ENCODE measurements at regions of chr1 and their contacts with region 1.

Region 1: GRCh38 chr1:234326497-234327366 is 46.5 kb upstream of the COA6 start:
- DNase-seq: peak; percentile 81
- H3K4me3 Mint-ChIP-seq: peak overlapping the region; percentile 75
- H3K27ac Mint-ChIP-seq: peak overlapping the region; percentile 41
- H3K4me1 Mint-ChIP-seq: peaks cover 13% of the 10 kb centered on the region
- H3K27me3 Mint-ChIP-seq: peaks cover 14% of the 10 kb centered on the region

Region 2: GRCh38 chr1:234125283-234125682 is 201.4 kb before region 1 on chr1:
- CTCF ChIA-PET with region 1: interaction called, 14 read pairs
- intact Hi-C with region 1: no loop called
- DNase-seq: peak; percentile 57
- H3K4me3 Mint-ChIP-seq: no peak overlapping the region
- H3K27ac Mint-ChIP-seq: no peak overlapping the region
- H3K4me1 Mint-ChIP-seq: no peaks in the 10 kb centered on the region
- H3K27me3 Mint-ChIP-seq: peaks cover 29% of the 10 kb centered on the region

Region 3: DNA sequence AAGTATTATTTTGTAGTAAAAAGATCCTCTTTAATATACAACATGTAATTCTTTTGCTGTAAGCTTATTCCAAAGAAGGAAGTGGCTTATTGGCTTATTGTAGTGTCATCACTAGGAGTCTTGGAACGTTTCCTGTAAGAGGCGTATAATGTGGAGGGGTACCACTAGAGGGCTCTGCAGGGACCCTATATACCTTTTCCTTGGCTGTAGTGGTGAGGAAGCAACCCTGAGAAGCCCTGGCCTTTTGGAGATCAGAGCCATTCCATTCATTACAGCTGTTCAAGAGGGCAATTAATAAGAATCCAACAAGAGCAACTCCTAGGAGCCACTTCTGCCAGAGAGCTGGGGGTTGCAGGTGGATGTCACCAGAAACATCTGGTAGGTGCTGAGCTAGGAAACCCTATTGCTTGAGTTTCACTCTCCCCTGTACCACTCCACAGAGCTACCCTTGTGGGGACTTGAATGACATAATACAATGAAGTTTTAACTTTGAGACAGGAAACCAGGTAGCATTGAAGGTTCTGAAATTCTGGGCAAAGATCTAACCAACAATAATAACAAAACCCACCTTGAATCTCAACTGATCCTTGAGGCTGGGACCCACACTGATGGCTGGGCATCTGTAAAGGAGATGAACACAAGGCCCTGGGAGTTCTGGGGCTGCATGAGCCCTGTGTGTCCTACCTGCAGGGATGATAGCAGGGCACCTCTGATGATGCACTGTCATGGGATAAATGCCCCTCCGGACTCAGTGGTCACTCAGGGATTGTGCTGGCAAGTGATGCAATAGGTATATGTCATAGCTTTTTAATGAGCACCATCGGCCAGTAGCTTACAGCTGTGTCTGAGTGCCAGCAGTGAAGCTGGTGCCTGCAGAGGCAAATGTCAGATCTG is 113.7 kb before region 1 on chr1:
- CTCF ChIA-PET with region 1: interaction called, 12 read pairs
- intact Hi-C with region 1: loop called (anchors 1 kb)
- DNase-seq: peak; percentile 56
- H3K4me3 Mint-ChIP-seq: no peak overlapping the region
- H3K27ac Mint-ChIP-seq: no peak overlapping the region
- H3K4me1 Mint-ChIP-seq: peaks cover 12% of the 10 kb centered on the region
- H3K27me3 Mint-ChIP-seq: peaks cover 43% of the 10 kb centered on the region

Region 4: GRCh38 chr1:234478481-234479309 is 152.0 kb after region 1 on chr1 and contains the start of gene TARBP1:
- CTCF ChIA-PET with region 1: no interaction called
- intact Hi-C with region 1: loop called (anchors 2 kb)
- DNase-seq: peak; percentile 77
- H3K4me3 Mint-ChIP-seq: peak within 1 kb of the TSS; percentile 79
- H3K27ac Mint-ChIP-seq: peak within 1 kb of the TSS; percentile 46
- H3K4me1 Mint-ChIP-seq: peaks cover 49% of the 10 kb centered on the region
- H3K27me3 Mint-ChIP-seq: peaks cover 12% of the 10 kb centered on the region
- total RNA-seq, gene TARBP1: 40.2 to 41.6 TPM

Measured in activated naive CD4-positive, alpha-beta T cell treated with anti-CD3 and anti-CD28 coated beads for 36 hours (primary cell).